Posterior vena cava (tissue), 2 donors: ENCODE measurements at regions of chr1 and their contacts with region 1.

Region 1: DNA sequence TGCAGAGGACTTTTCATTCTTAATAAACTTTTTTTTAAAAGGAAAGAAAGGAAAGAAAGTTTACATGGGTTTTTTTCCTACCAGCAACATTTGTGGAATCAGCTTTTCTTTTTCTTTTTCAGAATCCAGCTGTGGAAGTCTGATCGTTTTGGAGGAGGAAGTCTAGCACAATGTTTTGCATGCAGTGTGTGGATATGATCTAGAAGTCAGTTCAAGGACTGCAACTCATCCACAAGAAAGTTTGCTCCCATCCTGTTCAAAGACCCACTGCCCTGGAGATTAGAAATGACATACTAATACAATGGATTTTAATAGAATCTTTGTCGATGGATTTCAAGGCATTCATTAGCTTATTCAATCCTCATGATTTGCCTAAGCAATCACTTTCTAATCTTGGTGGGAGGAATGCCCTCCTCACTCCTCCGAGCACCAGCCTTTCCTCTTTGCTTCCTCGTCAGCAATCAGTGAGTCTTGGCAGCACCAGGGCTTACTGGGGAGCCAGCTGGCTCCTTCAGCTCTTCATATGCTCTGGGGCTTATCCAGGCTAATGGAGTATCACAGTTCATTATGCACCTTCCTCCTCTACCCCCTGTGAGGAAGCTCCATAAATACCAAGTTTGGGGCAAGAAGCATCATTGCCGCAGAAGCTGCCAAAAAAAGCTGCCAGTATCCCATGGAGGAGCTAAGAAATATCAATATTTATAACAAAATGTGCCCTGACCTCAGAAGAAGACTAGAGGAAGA is 392.3 kb upstream of the PKN2 start:
- DNase-seq: no peak

Region 2: GRCh38 chr1:87292684-87293493 is 998.9 kb before region 1 on chr1:
- intact Hi-C with region 1: loop called in 1 of 2 experiments (anchors 10 kb)
- DNase-seq: no peak

Region 3: GRCh38 chr1:88321706-88322105 is 29.9 kb after region 1 on chr1:
- intact Hi-C with region 1: no loop called
- DNase-seq: no peak

Region 4: DNA sequence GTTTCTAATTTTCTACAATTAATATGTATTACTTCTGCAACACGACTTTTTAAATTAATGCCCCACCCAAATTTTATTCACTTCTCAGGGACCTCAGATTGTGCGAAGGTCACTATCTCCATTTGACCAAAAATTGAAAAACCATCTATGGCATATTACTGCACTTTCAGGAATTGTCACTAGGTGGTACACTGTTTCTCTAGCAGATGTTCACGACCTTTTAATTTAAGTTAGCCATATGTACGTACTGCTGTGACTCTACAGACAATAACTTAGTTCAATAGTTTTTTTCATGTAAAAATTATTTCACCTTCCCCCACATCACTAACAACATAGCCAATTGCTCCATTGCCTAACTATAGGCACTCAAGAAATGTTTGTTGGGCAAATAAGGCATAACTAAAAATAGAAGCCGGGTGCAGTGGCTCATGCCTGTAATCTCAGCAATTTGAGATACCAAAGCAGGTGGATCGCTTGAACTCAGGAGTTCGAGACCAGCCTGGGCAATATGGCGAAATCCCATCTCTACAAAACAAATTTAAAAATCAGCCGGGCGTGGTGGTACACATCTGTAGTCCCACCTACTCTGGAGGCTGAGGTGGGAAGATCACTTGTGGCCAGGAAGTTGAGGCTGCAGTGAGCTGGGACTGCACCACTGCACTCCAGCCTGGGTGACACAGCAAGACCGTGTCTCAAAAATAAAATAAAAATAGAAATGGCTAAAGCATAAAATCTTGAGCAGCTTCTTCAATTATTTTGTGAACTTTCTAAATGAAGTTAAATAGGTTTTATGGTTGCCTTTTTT is 316.6 kb after region 1 on chr1:
- intact Hi-C with region 1: no loop called
- DNase-seq: no peak